Sciatic nerve (tissue), 2 donors: ENCODE measurements at regions of chr15 and their contacts with region 1.

Region 1: DNA sequence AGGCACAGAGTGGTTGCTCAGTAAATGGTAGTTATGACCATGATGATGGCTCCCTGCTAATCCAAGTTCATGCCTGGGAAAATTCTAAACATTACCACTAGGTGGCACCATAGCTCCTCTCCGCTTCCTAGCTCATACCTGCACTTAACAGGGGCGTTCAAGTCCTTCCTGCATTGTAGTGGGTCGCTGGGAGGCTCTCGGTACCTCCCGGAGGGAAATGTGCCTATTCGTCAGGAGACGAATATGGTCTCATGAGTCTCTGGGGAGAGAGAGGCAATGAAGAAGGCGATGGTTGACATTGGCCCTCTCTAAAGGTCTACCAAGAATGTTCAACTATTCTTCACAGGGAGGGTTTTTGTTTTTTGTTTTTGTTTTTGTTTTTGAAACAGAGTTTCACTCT is 10.9 kb downstream of the MESP1 start:
- DNase-seq: no peak
- ATAC-seq: peak; percentile 85

Region 2: DNA sequence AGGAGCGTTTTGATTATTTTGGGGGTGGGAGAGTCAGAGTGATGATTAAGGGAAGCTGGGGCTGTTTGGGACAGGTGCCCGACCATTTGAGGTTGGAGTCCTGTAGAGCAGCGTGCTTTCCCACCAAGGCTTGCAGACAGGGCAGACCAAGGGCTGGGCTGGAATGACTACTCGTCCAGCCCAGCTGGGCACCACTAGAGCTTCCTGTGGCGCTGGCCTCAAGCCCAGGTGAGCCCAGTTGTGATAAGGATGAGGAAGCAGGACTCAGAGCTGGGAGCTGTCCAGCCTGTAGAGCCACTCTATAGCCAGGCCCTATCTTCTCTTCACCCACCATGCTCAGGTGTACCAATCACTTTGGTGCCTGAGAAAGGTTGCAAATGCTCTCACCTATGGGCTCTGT is 1012.7 kb before region 1 on chr15:
- intact Hi-C with region 1: no loop called
- DNase-seq: no peak
- ATAC-seq: no peak

Region 3: GRCh38 chr15:90086868-90087268 is 346.7 kb after region 1 on chr15:
- intact Hi-C with region 1: loop called (anchors 10 kb)
- DNase-seq: no peak
- ATAC-seq: no peak